Activated CD8-positive, alpha-beta memory T cell treated with anti-CD3 and anti-CD28 coated beads, Interleukin-2, amount 10 ng/mL, durations not matched to agents 7 days and 5 days (primary cell): ENCODE measurements at regions of chr2 and their contacts with region 1.

Region 1: DNA sequence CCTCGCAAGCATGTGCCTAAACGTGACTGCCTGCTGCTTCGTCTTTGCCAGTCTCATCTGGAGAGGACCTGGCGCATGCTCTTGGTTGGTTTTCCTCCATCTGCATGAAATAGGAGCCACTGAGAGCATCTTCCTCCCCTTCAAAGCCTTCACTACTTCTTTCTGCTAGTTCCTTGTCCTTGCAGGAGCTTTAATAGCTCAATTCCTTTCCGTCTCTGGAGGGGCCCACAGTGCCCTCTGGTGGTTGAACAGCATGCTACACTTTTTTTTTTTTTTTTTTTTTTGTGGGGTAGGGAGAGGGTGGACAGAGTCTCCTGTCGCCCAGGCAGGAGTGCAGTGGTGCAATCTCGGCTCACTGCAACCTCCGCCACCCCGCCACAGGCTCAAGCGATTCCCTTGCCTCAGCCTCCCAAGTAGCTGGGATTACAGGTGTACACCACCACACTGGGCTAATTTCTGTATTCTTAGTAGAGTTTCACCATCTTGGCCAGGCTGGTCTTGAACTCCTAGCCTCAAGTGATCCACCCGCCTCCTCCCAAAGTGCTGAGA is 59.6 kb downstream of the SP110 start:
- DNase-seq: peak; percentile 58
- ATAC-seq: peak; percentile 58
- H3K4me3 Mint-ChIP-seq: no peak overlapping the region
- H3K27ac Mint-ChIP-seq: peak overlapping the region; percentile 20
- H3K4me1 Mint-ChIP-seq: peaks cover 14% of the 10 kb centered on the region
- H3K27me3 Mint-ChIP-seq: no peaks in the 10 kb centered on the region

Region 2: GRCh38 chr2:230007931-230008707 is 152.1 kb before region 1 on chr2:
- CTCF ChIA-PET with region 1: interaction called, 98 read pairs
- DNase-seq: peak; percentile 85
- ATAC-seq: peak; percentile 53
- H3K4me3 Mint-ChIP-seq: peak overlapping the region; percentile 32
- H3K27ac Mint-ChIP-seq: no peak overlapping the region
- H3K4me1 Mint-ChIP-seq: peaks cover 8% of the 10 kb centered on the region
- H3K27me3 Mint-ChIP-seq: no peaks in the 10 kb centered on the region

Region 3: GRCh38 chr2:230068016-230068650 is 92.1 kb before region 1 on chr2:
- CTCF ChIA-PET with region 1: interaction called, 58 read pairs
- DNase-seq: peak; percentile 52
- ATAC-seq: peak; percentile 52
- H3K4me3 Mint-ChIP-seq: peak overlapping the region; percentile 68
- H3K27ac Mint-ChIP-seq: no peak overlapping the region
- H3K4me1 Mint-ChIP-seq: peaks cover 25% of the 10 kb centered on the region
- H3K27me3 Mint-ChIP-seq: peaks cover 45% of the 10 kb centered on the region

Region 4: GRCh38 chr2:230106810-230107209 is 53.4 kb before region 1 on chr2:
- CTCF ChIA-PET with region 1: no interaction called
- DNase-seq: no peak
- ATAC-seq: no peak
- H3K4me3 Mint-ChIP-seq: no peak overlapping the region
- H3K27ac Mint-ChIP-seq: no peak overlapping the region
- H3K4me1 Mint-ChIP-seq: no peaks in the 10 kb centered on the region
- H3K27me3 Mint-ChIP-seq: peaks cover 38% of the 10 kb centered on the region

Region 5: GRCh38 chr2:230130668-230131364 is 29.4 kb before region 1 on chr2:
- CTCF ChIA-PET with region 1: interaction called, 12 read pairs
- DNase-seq: no peak
- ATAC-seq: no peak
- H3K4me3 Mint-ChIP-seq: no peak overlapping the region
- H3K27ac Mint-ChIP-seq: no peak overlapping the region
- H3K4me1 Mint-ChIP-seq: peaks cover 19% of the 10 kb centered on the region
- H3K27me3 Mint-ChIP-seq: peaks cover 2% of the 10 kb centered on the region

Region 6: GRCh38 chr2:230170532-230170931 is 10.3 kb after region 1 on chr2:
- CTCF ChIA-PET with region 1: interaction called, 15 read pairs
- DNase-seq: no peak
- ATAC-seq: no peak
- H3K4me3 Mint-ChIP-seq: no peak overlapping the region
- H3K27ac Mint-ChIP-seq: no peak overlapping the region
- H3K4me1 Mint-ChIP-seq: peaks cover 6% of the 10 kb centered on the region
- H3K27me3 Mint-ChIP-seq: no peaks in the 10 kb centered on the region